ENCODE measurements at regions of chr9 and their contacts with region 1.

Region 1: DNA sequence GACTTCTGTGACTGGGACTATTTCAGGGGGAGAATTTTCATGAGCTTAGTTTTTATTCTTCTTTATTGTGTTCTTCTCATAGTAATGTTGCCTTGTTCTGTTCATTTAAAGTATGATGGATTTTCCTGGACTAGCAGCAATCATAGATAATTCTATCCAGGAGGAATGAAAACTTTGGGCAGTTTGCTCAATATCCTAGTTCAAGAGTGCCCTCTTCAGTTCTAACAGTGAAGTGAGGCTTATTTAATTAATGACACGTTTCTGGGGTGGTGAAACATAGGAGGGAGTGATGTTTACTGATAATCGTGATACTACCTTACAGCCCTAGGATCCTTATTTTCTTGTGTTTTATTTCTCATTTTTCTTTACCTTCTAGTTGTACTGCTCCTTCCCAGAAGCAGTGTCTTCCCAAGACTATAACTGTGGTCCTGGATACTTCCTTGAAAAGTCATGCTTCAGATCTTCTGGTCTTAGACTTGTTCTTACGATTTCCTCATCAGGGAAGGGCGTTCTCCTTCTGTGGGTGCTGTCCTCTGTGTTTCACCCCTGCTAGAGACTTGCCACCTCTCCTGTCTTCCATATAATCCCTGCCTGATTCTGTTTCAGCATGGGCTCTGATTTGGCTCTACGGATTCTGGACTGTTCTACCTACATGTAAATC is 57.4 kb downstream of the CFAP95 start:
- DNase-seq: peak in 2 of 42 donors; percentile 6 to 42

Region 2: DNA sequence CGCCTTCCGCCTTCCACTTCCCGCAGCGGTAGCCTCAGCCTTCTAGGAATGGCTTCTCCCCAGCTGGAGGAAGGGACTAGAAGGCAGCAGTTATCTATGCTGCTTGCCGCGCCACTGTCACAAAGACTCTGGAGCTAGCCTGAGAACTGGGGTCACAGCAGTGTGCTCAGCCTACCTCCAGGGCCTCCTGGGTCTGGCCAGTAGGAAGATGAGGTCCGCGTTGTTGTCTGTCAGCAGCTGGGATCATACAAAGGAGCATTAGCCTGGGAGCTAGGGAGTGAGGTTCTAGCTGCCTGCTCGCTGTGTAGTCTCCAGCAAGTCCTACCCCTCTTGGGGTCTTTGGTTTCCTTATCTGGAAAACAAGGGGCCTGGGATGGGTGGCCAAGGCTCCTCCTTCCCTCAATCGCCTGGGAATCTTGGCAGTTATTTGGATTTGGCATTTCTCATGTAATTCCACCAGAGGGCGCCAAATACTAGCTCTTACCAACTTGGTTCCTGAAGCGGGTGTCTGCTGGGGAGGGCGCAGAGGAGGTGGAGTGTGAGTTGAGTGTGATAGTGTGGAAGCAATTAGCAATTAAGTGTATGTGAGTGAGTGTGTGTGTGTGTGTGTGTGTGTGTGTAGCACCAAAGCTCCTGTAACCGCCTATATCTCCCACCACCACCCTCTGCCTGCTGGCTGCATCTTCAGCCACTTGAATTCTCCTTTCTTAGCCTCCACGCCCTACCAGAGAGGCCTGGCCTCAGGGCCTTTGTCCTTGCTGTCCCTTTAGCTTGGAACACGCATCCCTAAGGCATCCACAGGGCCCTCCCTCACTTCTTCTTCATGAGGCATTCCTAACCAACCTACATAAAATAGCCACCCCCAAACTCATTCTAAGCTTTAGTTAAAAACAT is 455.8 kb before region 1 on chr9:
- intact Hi-C with region 1: loop called (anchors 5 kb)
- DNase-seq: peak; percentile 45 to 92 (median 78)

Region 3: DNA sequence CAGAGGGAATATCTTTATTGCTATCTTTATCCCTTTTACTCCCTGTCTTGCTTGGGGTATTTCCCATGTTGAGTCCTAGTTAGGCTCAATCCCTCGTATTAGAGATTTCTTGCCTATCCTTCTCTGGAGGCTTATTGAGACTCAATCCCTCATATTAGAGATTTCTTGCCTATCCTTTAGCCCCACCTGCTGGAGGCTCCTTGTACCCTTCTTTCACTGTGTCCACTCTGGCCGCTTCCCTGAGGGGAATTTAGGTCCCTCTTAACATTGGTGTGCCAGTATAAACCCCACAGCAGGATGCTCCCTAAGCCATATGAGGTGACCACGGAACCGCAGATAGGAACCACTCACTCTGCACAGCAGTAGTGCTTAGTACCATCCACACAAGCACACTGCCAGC is 54.9 kb after region 1 on chr9:
- intact Hi-C with region 1: loop called (anchors 10 kb)
- DNase-seq: peak in 9 of 42 donors; percentile 5 to 51 (median 11)

Measured in head of caudate nucleus (tissue), 42 donors.